ENCODE measurements at regions of chr7 and their contacts with region 1.

Region 1: GRCh38 chr7:134646425-134647305 is at the start of gene BPGM:
- DNase-seq: peak; percentile 97
- ATAC-seq: peak; percentile 98
- H3K4me3 Mint-ChIP-seq: no peak within 1 kb of the TSS
- H3K27ac Mint-ChIP-seq: peak within 1 kb of the TSS; percentile 17
- H3K4me1 Mint-ChIP-seq: peaks cover 40% of the 10 kb centered on the region
- H3K27me3 Mint-ChIP-seq: no peaks in the 10 kb centered on the region
- CTCF ChIP-seq: no peak
- total RNA-seq, gene BPGM: 11.2 to 12.4 TPM

Region 2: GRCh38 chr7:134660961-134661376 is 14.3 kb after region 1 on chr7:
- CTCF ChIA-PET with region 1: interaction called, 6 read pairs
- POLR2A ChIA-PET with region 1: interaction called, 24 read pairs
- intact Hi-C with region 1: no loop called
- DNase-seq: no peak
- ATAC-seq: no peak
- H3K4me3 Mint-ChIP-seq: no peak overlapping the region
- H3K27ac Mint-ChIP-seq: no peak overlapping the region
- H3K4me1 Mint-ChIP-seq: peaks cover 33% of the 10 kb centered on the region
- H3K27me3 Mint-ChIP-seq: no peaks in the 10 kb centered on the region
- CTCF ChIP-seq: no peak

Region 3: DNA sequence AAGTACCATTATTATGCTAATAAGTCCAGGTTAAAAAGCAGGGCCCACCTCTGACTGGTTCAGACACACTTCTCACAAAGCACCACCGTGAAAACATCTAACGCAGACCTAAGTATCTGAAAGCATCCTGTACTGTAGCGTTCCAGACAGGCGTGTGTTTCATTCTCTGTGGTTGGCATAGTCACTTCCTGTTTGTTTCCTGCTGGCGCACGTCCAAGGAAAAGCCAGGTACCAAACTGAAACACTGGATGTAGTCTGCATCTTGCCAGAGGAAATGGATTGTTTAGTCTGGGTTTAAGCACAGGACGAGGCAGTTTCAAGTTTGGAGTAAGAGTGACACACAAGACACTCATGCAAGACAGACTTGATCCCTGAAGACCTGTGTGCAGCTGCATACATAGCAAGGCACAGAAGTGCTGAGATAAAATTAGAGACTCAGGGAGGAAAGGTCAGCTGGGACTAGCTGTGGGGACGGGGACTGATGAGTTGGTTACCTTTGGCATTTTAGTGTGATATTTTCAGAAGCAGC is 23.2 kb after region 1 on chr7:
- CTCF ChIA-PET with region 1: interaction called, 3 read pairs
- POLR2A ChIA-PET with region 1: interaction called, 25 read pairs
- intact Hi-C with region 1: no loop called
- DNase-seq: peak; percentile 81
- ATAC-seq: peak; percentile 77
- H3K4me3 Mint-ChIP-seq: peak overlapping the region; percentile 26
- H3K27ac Mint-ChIP-seq: peak overlapping the region; percentile 83
- H3K4me1 Mint-ChIP-seq: peaks cover 44% of the 10 kb centered on the region
- H3K27me3 Mint-ChIP-seq: no peaks in the 10 kb centered on the region
- CTCF ChIP-seq: no peak

Region 4: GRCh38 chr7:134710859-134711624 is 64.4 kb after region 1 on chr7:
- CTCF ChIA-PET with region 1: no interaction called
- POLR2A ChIA-PET with region 1: interaction called, 6 read pairs
- intact Hi-C with region 1: loop called (anchors 5 kb)
- DNase-seq: peak; percentile 81
- ATAC-seq: peak; percentile 94
- H3K4me3 Mint-ChIP-seq: peak overlapping the region; percentile 50
- H3K27ac Mint-ChIP-seq: peak overlapping the region; percentile 90
- H3K4me1 Mint-ChIP-seq: peaks cover 17% of the 10 kb centered on the region
- H3K27me3 Mint-ChIP-seq: no peaks in the 10 kb centered on the region
- CTCF ChIP-seq: no peak

Region 5: DNA sequence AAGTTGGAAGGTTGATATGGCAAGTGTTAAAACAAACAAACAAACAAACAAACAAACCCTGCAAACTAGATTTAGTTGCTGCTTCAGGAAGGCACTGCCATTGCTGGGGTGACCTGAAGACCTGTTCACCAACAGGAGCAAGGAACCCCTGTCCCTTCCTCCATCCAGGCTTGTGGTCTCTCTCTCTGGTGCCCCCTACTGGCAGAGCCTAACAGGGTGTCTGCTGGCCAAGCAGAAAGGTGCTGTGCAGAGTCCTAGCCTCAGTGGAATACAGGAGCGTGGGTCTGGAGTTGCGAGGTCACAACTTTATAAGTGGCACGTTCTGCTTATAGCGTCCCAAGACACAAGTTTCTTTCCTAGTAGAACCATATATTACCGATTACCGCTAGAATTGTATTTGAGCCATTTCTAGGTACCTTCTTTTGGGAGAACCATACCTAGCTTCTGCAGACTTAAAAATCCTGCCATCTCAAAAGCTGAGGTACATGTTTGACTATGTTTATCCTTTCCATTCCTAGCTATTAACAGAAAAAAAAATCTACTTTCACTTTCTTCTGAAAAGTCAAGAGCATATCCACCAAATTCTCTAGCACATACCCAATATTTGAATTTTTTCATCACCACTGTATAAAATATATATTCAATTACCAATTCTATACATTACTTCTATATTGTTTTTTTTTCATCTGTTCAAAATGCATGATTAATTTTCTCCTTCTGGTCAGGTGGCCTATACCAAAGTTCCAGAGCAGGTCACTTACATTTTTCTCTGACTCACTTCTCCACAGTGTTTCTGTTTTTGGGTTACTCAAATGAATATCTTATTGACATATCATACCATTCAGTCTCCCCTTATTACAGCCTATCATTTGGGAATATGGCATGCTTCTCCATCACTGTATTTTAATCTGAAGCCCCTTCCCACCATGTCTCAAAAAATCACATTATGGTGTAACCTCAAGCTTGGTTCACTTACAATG is 103.7 kb after region 1 on chr7:
- CTCF ChIA-PET with region 1: interaction called, 7 read pairs
- POLR2A ChIA-PET with region 1: no interaction called
- intact Hi-C with region 1: loop called (anchors 5 kb)
- DNase-seq: peak; percentile 81
- ATAC-seq: peak; percentile 84
- H3K4me3 Mint-ChIP-seq: no peak overlapping the region
- H3K27ac Mint-ChIP-seq: no peak overlapping the region
- H3K4me1 Mint-ChIP-seq: no peaks in the 10 kb centered on the region
- H3K27me3 Mint-ChIP-seq: peaks cover 2% of the 10 kb centered on the region
- CTCF ChIP-seq: peak; percentile 73

Measured in activated CD8-positive, alpha-beta T cell treated with anti-CD3 and anti-CD28 coated beads for 36 hours (primary cell).